ENCODE measurements at regions of chr13 and their contacts with region 1.

Region 1: GRCh38 chr13:99406799-99407201 is 94.5 kb upstream of the TM9SF2 start:
- DNase-seq: peak in 1 of 14 experiments; percentile 6
- ATAC-seq: no peak
- H3K4me3 ChIP-seq: no peak overlapping the region
- H3K4me3 Mint-ChIP-seq: peak overlapping the region; percentile 13
- H3K27ac ChIP-seq: no peak overlapping the region
- H3K27ac Mint-ChIP-seq: peak overlapping the region; percentile 47
- H3K4me1 ChIP-seq: peaks cover 26% of the 10 kb centered on the region
- H3K4me1 Mint-ChIP-seq: peaks cover 59% of the 10 kb centered on the region
- H3K27me3 ChIP-seq: no peaks in the 10 kb centered on the region
- H3K27me3 Mint-ChIP-seq: no peaks in the 10 kb centered on the region
- CTCF ChIP-seq: no peak

Region 2: GRCh38 chr13:98436233-98436910 is 970.4 kb before region 1 on chr13:
- CTCF ChIA-PET with region 1: no interaction called
- POLR2A ChIA-PET with region 1: no interaction called
- intact Hi-C with region 1: no loop called
- DNase-seq: no peak
- ATAC-seq: no peak
- H3K4me3 ChIP-seq: no peak overlapping the region
- H3K4me3 Mint-ChIP-seq: no peak overlapping the region
- H3K27ac ChIP-seq: no peak overlapping the region
- H3K27ac Mint-ChIP-seq: no peak overlapping the region
- H3K4me1 ChIP-seq: no peaks in the 10 kb centered on the region
- H3K4me1 Mint-ChIP-seq: no peaks in the 10 kb centered on the region
- H3K27me3 ChIP-seq: no peaks in the 10 kb centered on the region
- H3K27me3 Mint-ChIP-seq: peaks cover 6% of the 10 kb centered on the region
- CTCF ChIP-seq: no peak

Region 3: GRCh38 chr13:99393791-99394735 is 12.7 kb before region 1 on chr13:
- CTCF ChIA-PET with region 1: no interaction called
- POLR2A ChIA-PET with region 1: interaction called, 5 read pairs
- intact Hi-C with region 1: loop called in 1 of 2 experiments (anchors 2 kb)
- DNase-seq: no peak
- ATAC-seq: no peak
- H3K4me3 ChIP-seq: no peak overlapping the region
- H3K4me3 Mint-ChIP-seq: no peak overlapping the region
- H3K27ac ChIP-seq: no peak overlapping the region
- H3K27ac Mint-ChIP-seq: peak overlapping the region; percentile 58
- H3K4me1 ChIP-seq: peaks cover 6% of the 10 kb centered on the region
- H3K4me1 Mint-ChIP-seq: peaks cover 15% of the 10 kb centered on the region
- H3K27me3 ChIP-seq: no peaks in the 10 kb centered on the region
- H3K27me3 Mint-ChIP-seq: no peaks in the 10 kb centered on the region
- CTCF ChIP-seq: no peak

Region 4: GRCh38 chr13:99417201-99418102 is 10.7 kb after region 1 on chr13:
- CTCF ChIA-PET with region 1: no interaction called
- POLR2A ChIA-PET with region 1: interaction called, 11 read pairs
- intact Hi-C with region 1: no loop called
- DNase-seq: peak in 6 of 14 experiments; percentile 41 to 66 (median 52)
- ATAC-seq: peak; percentile 30
- H3K4me3 ChIP-seq: peak overlapping the region; percentile 52
- H3K4me3 Mint-ChIP-seq: no peak overlapping the region
- H3K27ac ChIP-seq: peak overlapping the region; percentile 59 to 76
- H3K27ac Mint-ChIP-seq: no peak overlapping the region
- H3K4me1 ChIP-seq: peaks cover 88% of the 10 kb centered on the region
- H3K4me1 Mint-ChIP-seq: peaks cover 62% of the 10 kb centered on the region
- H3K27me3 ChIP-seq: no peaks in the 10 kb centered on the region
- H3K27me3 Mint-ChIP-seq: no peaks in the 10 kb centered on the region
- CTCF ChIP-seq: no peak